ENCODE measurements at regions of chrX and their contacts with region 1.

Region 1: GRCh38 chrX:129360175-129360574 is 163.1 kb downstream of the SMARCA1 start:
- DNase-seq: peak in 1 of 5 donors; percentile 6
- ATAC-seq: peak in 1 of 4 donors; percentile 33
- H3K4me3 ChIP-seq: no peak overlapping the region
- H3K27ac ChIP-seq: no peak overlapping the region
- H3K4me1 ChIP-seq: no peaks in the 10 kb centered on the region
- H3K27me3 ChIP-seq: no peaks in the 10 kb centered on the region
- CTCF ChIP-seq: peak in 11 of 12 donors; percentile 30 to 58 (median 46)
- POLR2A ChIP-seq: no peak

Region 2: DNA sequence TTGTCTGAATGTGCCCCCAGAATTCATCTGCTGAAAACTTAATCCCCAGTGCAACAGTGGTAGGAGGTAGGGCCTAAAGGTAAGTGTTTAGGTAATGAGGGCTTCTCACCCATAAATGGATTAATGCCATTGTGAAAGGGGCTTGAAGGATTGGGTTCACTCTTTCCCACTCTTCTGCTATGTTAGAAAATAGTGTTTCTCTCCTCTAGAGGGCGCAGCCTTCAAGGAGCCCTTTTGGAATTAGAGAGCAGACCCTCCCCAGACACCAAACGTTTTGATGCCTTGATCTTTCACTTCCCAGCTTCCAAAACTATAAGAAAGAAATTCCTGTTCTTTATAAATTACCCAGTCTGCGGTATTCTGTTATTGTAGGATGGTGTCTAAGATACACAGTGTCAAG is 543.3 kb before region 1 on chrX:
- intact Hi-C with region 1: loop called in 1 of 10 experiments (anchors 5 kb)
- DNase-seq: no peak
- ATAC-seq: no peak
- H3K4me3 ChIP-seq: no peak overlapping the region
- H3K27ac ChIP-seq: no peak overlapping the region
- H3K4me1 ChIP-seq: no peaks in the 10 kb centered on the region
- H3K27me3 ChIP-seq: no peaks in the 10 kb centered on the region
- CTCF ChIP-seq: peak in 8 of 12 donors; percentile 7 to 37 (median 20)
- POLR2A ChIP-seq: no peak

Region 3: DNA sequence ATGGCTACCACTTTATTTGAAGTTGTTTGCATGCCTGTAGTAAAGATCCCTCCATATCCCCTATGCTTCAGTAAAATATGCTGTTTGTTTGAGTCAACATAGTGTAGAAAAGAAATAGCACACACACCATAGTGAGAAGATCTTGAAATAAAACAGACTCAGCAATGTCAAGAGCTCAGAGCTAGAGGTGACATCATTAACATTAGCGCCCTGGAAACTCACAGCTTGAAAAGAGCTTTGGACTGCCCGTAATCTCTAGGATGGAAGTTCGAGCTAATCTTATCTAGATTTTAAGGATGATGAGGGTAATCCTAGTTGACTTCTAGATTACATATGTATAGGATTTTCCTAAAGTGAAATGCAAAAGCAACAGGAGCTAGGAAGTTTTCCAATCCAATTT is 112.5 kb before region 1 on chrX:
- intact Hi-C with region 1: no loop called
- DNase-seq: no peak
- ATAC-seq: no peak
- H3K4me3 ChIP-seq: no peak overlapping the region
- H3K27ac ChIP-seq: no peak overlapping the region
- H3K4me1 ChIP-seq: no peaks in the 10 kb centered on the region
- H3K27me3 ChIP-seq: no peaks in the 10 kb centered on the region
- CTCF ChIP-seq: no peak
- POLR2A ChIP-seq: no peak